Sigmoid colon (tissue), 7 donors: ENCODE measurements at regions of chr3 and their contacts with region 1.

Region 1: DNA sequence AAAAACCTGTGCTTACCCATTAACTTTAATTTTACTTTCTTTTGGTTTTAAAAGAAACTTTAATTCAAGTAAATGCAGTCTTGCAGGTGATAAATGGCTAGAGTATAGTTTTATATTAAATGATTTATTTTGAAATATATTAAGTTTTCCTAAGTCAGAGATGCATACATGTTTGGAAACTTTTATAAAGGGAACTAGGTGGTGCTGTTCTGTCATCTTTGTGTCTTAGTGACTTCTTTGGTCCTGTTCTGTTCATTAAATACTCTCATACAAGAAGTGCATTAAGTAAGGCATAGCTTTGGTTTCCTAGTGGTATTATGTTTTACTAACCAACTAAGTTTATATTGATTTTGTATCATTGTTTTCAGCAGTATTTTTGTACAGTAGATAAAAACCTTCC is 15.6 kb downstream of the CADM2 start:
- DNase-seq: no peak
- H3K4me3 ChIP-seq: no peak overlapping the region
- H3K27ac ChIP-seq: no peak overlapping the region
- H3K4me1 ChIP-seq: no peaks in the 10 kb centered on the region
- H3K27me3 ChIP-seq: no peaks in the 10 kb centered on the region
- CTCF ChIP-seq: no peak
- EP300 ChIP-seq: no peak
- POLR2A ChIP-seq: no peak

Region 2: DNA sequence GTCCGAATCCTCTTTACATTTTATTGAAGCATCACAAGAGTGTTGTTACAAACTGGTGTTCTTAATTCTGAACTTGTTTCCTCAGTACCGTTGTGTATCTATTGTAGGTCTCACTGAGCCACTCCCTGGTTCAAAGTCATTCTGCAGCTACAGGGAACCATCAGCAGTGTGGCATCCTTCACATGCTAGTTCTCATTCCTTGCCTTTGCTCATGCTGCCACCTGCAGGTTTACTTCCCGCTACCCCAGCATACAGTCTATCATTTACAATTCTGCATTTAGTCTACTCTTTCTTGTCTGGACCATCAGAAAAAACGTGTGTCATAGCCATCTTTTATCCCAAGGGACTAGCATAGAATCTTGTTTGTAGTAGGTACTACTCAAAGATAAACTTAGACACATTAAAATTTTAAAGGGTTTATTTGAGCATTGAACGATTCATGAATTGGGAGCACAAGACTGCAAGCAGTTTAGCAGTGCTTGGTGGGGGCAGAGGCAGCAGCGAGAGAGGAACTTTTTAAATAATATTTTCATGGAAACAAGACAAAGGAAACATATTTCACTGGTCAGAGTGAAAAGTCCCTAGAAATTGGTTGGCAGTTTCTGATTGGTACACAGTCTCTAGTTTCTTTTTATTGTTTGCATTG is 386.5 kb after region 1 on chr3:
- intact Hi-C with region 1: loop called (anchors 10 kb)
- DNase-seq: no peak
- H3K4me3 ChIP-seq: no peak overlapping the region
- H3K27ac ChIP-seq: no peak overlapping the region
- H3K4me1 ChIP-seq: no peaks in the 10 kb centered on the region
- H3K27me3 ChIP-seq: no peaks in the 10 kb centered on the region
- CTCF ChIP-seq: peak in 2 of 4 experiments; percentile 8 to 17
- EP300 ChIP-seq: no peak
- POLR2A ChIP-seq: no peak